PC-9 (cell line): ENCODE measurements at regions of chr2 and their contacts with region 1.

Region 1: GRCh38 chr2:239693330-239693729 is 292.5 kb upstream of the HDAC4 start:
- DNase-seq: no peak
- H3K4me3 ChIP-seq: no peak overlapping the region
- H3K27ac ChIP-seq: no peak overlapping the region
- H3K4me1 ChIP-seq: no peaks in the 10 kb centered on the region
- H3K27me3 ChIP-seq: peaks cover 98% of the 10 kb centered on the region
- CTCF ChIP-seq: no peak

Region 2: DNA sequence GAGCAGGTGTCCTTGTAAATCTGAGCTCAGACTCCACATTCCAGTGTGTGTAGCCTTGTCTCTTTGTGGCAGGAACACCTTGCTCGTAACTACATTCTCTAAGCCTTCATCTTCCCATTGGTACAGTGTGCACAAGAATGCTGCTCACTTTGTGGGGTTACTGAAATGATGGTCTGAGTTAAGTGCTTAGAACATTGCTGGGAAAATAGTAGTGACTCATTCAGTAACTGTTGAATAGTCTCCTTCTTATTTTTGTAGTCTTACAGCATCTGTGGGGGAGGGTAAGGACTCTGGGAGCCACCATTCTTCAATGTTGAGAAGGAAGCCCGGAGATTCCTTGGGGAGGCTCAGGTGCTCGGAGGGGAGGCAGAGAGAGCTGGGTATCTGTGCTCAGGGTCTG is 56.5 kb before region 1 on chr2:
- CTCF ChIA-PET with region 1: no interaction called
- POLR2A ChIA-PET with region 1: interaction called, 33 read pairs
- intact Hi-C with region 1: no loop called
- DNase-seq: no peak
- H3K4me3 ChIP-seq: no peak overlapping the region
- H3K27ac ChIP-seq: no peak overlapping the region
- H3K4me1 ChIP-seq: no peaks in the 10 kb centered on the region
- H3K27me3 ChIP-seq: peaks cover 70% of the 10 kb centered on the region
- CTCF ChIP-seq: no peak

Region 3: DNA sequence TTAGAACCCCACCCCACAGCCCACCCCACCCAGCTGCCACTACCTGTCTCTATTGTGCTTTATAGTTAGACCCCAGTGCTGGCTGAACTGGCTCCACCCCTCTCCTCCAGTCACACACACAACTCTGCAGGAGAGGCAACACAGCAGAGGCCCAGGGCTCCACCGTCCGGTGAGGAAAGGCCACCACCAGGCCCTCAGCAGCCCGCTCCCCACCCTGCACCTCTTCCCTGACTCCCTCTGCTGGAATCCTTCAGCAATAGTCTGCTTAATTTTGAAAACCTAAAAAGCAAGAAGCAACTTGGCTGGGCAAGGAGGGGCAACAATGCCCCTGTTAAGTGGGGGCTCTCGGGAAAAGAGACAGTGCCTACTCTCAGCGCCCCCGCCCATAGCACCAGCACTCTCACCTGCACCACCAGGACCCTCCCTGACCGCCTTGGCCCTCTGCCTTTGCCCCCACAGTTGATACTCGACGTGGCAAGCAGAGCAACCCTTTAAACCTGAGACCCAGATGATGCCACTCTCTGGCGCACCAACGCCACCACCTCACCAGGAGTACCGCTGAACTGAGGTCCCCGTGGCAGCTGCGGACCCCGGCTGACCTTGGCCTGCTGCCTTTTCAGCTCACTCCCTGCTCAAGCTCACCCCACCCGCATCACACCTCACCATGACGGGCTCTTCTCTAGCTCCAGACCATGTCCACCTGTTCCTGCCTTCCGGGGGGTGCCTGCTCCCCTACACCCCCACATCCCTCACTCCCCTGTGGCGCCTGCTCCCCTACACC is 286.1 kb after region 1 on chr2:
- CTCF ChIA-PET with region 1: no interaction called
- POLR2A ChIA-PET with region 1: no interaction called
- intact Hi-C with region 1: no loop called
- DNase-seq: no peak
- H3K4me3 ChIP-seq: no peak overlapping the region
- H3K27ac ChIP-seq: no peak overlapping the region
- H3K4me1 ChIP-seq: no peaks in the 10 kb centered on the region
- H3K27me3 ChIP-seq: no peaks in the 10 kb centered on the region
- CTCF ChIP-seq: no peak